GM10248 (cell line): ENCODE measurements at regions of chr10 and their contacts with region 1.

Region 1: DNA sequence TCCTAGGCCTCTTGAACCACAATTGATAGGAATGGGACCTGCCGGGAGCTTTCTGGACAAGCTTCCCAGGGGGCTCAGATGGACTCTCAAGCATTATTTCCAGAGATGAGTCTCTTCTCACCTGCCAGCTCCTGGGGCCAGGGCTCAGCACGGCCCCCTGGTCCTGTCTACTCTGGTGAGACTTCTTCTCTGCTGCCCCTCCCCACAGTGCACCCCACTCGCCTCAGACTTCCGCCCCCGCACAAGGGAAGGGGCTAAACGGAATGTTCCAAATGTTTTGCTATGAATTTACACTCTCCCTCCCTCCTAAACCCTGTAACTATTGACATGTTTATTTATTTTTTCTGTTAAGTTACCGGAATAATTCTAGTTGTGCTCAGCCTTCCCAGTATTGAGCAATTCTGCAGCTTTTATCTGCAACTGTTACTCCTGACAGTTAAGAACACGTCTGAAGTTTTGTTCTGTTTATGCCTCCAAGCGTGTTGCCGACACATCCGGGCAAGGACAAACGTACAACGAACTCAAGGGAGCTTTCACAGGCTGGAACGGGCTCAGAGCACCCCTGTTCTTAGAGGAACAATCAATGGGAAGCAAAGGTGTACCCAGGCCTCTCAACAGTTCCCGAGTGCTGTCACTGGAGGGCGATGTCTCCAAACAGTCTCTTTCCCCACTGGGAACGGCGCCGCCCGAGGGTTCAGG is 55.2 kb downstream of the FHIP2A start:
- DNase-seq: peak; percentile 76
- CTCF ChIP-seq: peak; percentile 87

Region 2: GRCh38 chr10:114754445-114755320 is 122.1 kb before region 1 on chr10:
- CTCF ChIA-PET with region 1: no interaction called
- POLR2A ChIA-PET with region 1: no interaction called
- DNase-seq: no peak
- CTCF ChIP-seq: no peak

Region 3: GRCh38 chr10:114862456-114862855 is 14.3 kb before region 1 on chr10:
- CTCF ChIA-PET with region 1: interaction called, 59 read pairs
- POLR2A ChIA-PET with region 1: no interaction called
- DNase-seq: no peak
- CTCF ChIP-seq: no peak

Region 4: GRCh38 chr10:114902151-114902550 is 25.4 kb after region 1 on chr10:
- CTCF ChIA-PET with region 1: interaction called, 23 read pairs
- POLR2A ChIA-PET with region 1: no interaction called
- DNase-seq: no peak
- CTCF ChIP-seq: no peak

Region 5: DNA sequence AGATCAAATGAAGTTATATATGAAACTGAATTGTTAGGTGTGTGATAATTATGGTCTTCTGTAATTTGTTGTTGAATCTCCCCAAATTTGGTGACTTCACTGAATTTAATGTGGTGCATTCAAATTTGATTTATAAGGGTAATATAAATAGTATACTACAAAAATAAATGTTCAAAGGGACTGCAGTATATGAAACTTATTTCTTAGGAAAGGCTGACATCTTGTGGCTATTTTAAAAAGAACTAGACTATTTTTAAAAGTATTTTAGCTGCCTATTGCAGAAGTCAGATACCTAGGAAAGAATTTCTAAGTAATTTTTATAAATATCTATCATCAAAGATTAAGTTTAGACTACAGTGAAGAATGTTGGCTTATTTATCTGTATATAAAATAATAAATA is 253.0 kb after region 1 on chr10:
- CTCF ChIA-PET with region 1: interaction called, 58 read pairs
- POLR2A ChIA-PET with region 1: no interaction called
- DNase-seq: peak; percentile 15
- CTCF ChIP-seq: peak; percentile 16

Region 6: GRCh38 chr10:115483294-115483693 is 606.5 kb after region 1 on chr10:
- CTCF ChIA-PET with region 1: no interaction called
- POLR2A ChIA-PET with region 1: no interaction called
- DNase-seq: no peak
- CTCF ChIP-seq: no peak